ENCODE measurements at regions of chr2 and their contacts with region 1.

Region 1: GRCh38 chr2:97011977-97012565 is 25.7 kb upstream of the FAM178B start:
- DNase-seq: peak in 1 of 10 donors; percentile 16
- H3K4me3 ChIP-seq: no peak overlapping the region
- H3K27ac ChIP-seq: no peak overlapping the region
- H3K27me3 ChIP-seq: peaks cover 0 to 2% (median 0%) of the 10 kb centered on the region in 45 donors
- CTCF ChIP-seq: peak in 55 of 56 donors; percentile 28 to 73 (median 57)

Region 2: GRCh38 chr2:97095661-97096060 is 83.6 kb after region 1 on chr2:
- intact Hi-C with region 1: loop called in 1 of 2 experiments (anchors 10 kb)
- DNase-seq: no peak
- H3K4me3 ChIP-seq: peak overlapping the region in 48 of 59 donors; percentile 31 to 70 (median 58)
- H3K27ac ChIP-seq: peak overlapping the region in 6 of 59 donors; percentile 66 to 82 (median 76)
- H3K27me3 ChIP-seq: no peaks in the 10 kb centered on the region
- CTCF ChIP-seq: no peak

Measured in dorsolateral prefrontal cortex (tissue), 120 donors.